Posterior cingulate gyrus (tissue), 11 donors: ENCODE measurements at regions of chr13 and their contacts with region 1.

Region 1: DNA sequence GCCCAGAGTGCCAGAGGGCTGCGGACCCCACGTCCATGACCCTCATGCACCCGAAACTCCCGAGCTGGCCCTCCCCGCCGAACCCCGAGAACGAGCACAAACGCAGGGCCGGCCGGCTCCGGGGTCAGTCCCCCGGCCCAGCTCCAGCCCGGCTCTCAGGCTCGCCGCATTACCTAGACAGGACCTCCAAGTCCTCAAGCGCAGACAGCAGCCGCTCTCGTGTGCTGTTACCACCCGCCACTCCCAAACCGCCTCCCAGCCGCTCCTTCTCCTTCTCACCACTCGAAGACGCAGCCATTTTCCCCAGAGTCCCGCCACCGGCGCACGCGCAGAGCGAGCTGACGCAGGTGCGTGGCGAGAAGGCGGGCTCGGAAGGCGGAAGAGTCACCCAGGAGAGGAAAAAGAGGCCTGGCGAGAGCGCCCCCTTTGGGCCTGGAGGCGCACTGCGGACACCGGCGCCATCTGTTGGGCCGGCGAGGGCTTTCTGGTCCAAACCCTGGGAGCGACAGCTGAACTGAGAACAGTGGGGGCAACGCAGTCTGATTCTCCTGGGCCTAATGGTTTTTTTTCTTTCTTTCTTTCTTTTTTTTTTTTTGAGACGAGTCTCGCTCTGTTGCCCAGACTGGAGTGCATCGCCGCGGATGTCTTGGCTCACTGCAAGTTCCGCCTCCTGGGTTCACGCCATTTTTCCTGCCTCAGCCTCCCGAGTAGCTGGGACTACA is at the start of gene MED4:
- DNase-seq: peak; percentile 91 to 99 (median 96)

Region 2: DNA sequence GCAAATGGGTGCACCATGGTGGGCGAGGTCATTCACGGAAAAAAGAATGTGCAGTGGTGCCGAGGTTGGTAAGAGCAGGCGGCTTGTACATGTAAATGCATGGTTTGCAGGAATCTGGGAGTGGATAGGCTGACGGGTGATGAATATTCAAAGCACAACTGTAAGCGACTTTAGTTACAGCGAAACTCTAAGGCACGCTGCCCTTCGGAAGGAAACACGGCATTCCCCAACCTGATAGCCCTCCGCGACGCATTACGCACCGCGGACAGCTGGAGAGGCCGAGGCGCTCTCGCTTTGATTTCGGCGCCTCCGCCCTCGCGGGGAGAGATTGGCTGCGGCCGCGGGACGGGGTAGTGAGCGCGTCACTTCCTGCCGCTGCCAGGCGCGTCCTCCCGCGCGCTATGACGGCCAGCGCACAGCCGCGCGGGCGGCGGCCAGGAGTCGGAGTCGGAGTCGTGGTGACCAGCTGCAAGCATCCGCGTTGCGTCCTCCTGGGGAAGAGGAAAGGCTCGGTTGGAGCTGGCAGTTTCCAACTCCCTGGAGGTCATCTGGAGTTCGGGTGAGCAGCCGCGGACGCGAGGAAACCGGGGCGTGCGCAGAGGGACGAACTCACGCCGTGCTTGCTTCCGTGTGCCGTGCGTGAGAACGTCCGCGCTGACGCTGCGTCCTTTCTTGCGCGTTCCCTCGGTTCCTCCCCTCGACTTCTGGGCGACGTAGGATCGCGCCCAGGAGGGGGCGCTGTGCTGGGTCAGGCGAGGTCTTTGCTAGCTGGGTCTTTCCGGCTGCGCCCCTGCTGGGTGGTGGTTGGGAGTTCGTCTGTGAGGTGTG is 57.4 kb before region 1 on chr13 and contains the start of gene NUDT15:
- intact Hi-C with region 1: loop called (anchors 2 kb)
- DNase-seq: peak; percentile 85 to 99 (median 92)

Region 3: GRCh38 chr13:48304143-48304876 is 209.4 kb after region 1 on chr13:
- intact Hi-C with region 1: no loop called
- DNase-seq: peak in 4 of 10 donors; percentile 10 to 81 (median 43)